ENCODE measurements at regions of chr10 and their contacts with region 1.

Region 1: DNA sequence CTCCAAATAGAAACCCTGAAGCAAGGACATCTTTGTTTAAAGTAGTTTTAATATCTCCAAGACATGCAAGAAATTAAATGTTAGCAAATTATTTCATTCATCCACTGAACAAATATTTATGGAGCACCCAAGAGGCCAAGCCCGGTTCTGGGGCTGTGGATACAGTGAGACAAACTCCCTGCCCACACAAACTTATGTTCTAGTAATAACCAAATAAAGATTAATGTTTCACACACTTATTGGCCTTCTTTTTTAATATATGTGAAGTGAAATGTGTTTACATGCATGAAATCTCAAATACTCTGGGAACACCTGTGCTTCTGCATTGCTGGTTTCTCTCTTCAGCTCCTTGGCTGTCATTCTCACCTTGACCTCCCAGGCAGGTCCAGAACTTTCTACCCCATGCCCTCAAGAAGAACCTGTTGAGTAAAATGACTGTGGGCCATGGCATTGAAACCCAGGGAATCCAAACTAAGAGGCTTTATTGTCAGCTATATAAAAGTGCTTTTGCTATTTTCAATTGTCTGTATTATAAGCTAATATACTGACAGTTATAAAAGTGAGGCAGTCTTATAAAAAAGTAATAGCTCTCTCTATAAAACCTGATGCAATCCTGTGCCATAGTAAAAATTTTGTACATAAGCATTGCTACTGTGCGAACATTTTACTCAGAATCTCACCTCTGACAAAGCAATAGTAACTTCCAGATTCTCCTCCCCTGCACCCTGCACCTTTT is 43.7 kb downstream of the SVIL start:
- DNase-seq: no peak

Region 2: DNA sequence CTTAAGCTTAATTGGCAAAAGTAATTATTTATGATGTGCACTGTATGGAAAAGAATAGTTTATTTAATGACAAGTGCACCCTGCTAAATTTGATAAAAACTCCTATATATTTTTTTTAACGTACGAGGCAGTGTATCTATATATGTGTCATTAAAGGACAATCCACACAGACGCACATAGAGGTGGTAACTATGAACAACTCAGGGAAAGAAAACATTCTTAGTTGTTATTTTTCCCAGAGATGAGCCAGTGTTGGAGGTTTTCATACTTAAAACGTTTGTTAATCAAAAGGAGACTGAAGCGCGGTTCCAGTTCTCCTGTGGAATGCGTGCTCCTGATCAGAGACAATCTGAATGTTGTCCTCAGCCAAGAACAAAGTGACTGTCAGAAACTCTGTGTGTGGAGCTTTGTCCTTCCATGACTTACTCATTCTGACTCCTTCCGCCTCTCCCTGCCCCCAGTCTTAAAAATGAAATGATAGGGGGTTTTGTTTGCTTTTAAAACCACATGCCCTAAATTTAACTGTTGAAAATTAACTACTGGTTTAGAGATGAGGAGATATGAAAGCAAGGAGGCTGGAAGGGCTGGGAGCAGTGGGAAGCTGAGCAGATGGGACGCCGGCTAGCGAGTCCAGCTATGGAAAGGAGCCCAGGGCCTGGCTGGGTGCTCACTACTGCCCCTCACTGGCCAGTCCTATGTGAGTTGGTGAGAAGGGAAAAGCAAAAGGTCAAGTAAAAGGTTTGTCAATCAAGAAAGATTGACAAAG is 55.9 kb before region 1 on chr10:
- intact Hi-C with region 1: loop called (anchors 5 kb)
- DNase-seq: no peak

Measured in cardiac septum (tissue), 1 donor.